T-cell (primary cell): ENCODE measurements at regions of chr1 and their contacts with region 1.

Region 1: GRCh38 chr1:180550241-180550640 is 8.5 kb upstream of the OVAAL start:
- DNase-seq: no peak
- ATAC-seq: no peak
- H3K4me3 ChIP-seq: no peak overlapping the region
- H3K4me3 Mint-ChIP-seq: no peak overlapping the region
- H3K27ac ChIP-seq: no peak overlapping the region
- H3K27ac Mint-ChIP-seq: no peak overlapping the region
- H3K4me1 ChIP-seq: no peaks in the 10 kb centered on the region
- H3K4me1 Mint-ChIP-seq: no peaks in the 10 kb centered on the region
- H3K27me3 ChIP-seq: peaks cover 0 to 2% of the 10 kb centered on the region in 2 experiments
- H3K27me3 Mint-ChIP-seq: no peaks in the 10 kb centered on the region

Region 2: GRCh38 chr1:180527101-180527669 is 23.1 kb before region 1 on chr1:
- CTCF ChIA-PET with region 1: no interaction called
- POLR2A ChIA-PET with region 1: no interaction called
- DNase-seq: no peak
- ATAC-seq: no peak
- H3K4me3 ChIP-seq: no peak overlapping the region
- H3K4me3 Mint-ChIP-seq: no peak overlapping the region
- H3K27ac ChIP-seq: no peak overlapping the region
- H3K27ac Mint-ChIP-seq: no peak overlapping the region
- H3K4me1 ChIP-seq: no peaks in the 10 kb centered on the region
- H3K4me1 Mint-ChIP-seq: peaks cover 0 to 3% (median 3%) of the 10 kb centered on the region in 3 donors
- H3K27me3 ChIP-seq: peaks cover 0 to 3% of the 10 kb centered on the region in 2 experiments
- H3K27me3 Mint-ChIP-seq: peaks cover 0 to 3% of the 10 kb centered on the region in 2 donors

Region 3: GRCh38 chr1:180854001-180854400 is 303.8 kb after region 1 on chr1:
- CTCF ChIA-PET with region 1: no interaction called
- POLR2A ChIA-PET with region 1: interaction called in 1 of 2 experiments, 15 read pairs
- DNase-seq: no peak
- ATAC-seq: no peak
- H3K4me3 ChIP-seq: no peak overlapping the region
- H3K4me3 Mint-ChIP-seq: no peak overlapping the region
- H3K27ac ChIP-seq: no peak overlapping the region
- H3K27ac Mint-ChIP-seq: no peak overlapping the region
- H3K4me1 ChIP-seq: peaks cover 2 to 3% of the 10 kb centered on the region in 2 experiments
- H3K4me1 Mint-ChIP-seq: peaks cover 19 to 35% (median 29%) of the 10 kb centered on the region in 3 donors
- H3K27me3 ChIP-seq: no peaks in the 10 kb centered on the region
- H3K27me3 Mint-ChIP-seq: no peaks in the 10 kb centered on the region

Region 4: GRCh38 chr1:182391362-182392044 is 1841.3 kb after region 1 on chr1 and contains the start of gene GLUL:
- CTCF ChIA-PET with region 1: no interaction called
- POLR2A ChIA-PET with region 1: no interaction called
- DNase-seq: peak; percentile 18 to 75 (median 48)
- ATAC-seq: peak; percentile 73 to 84 (median 75)
- H3K4me3 ChIP-seq: peak within 1 kb of the TSS; percentile 79 to 89
- H3K4me3 Mint-ChIP-seq: peak within 1 kb of the TSS; percentile 89 to 97 (median 97)
- H3K27ac ChIP-seq: peak within 1 kb of the TSS; percentile 40
- H3K27ac Mint-ChIP-seq: peak within 1 kb of the TSS; percentile 91 to 96
- H3K4me1 ChIP-seq: peaks cover 12 to 27% of the 10 kb centered on the region in 2 experiments
- H3K4me1 Mint-ChIP-seq: peaks cover 26 to 38% (median 35%) of the 10 kb centered on the region in 3 donors
- H3K27me3 ChIP-seq: peaks cover 0 to 11% of the 10 kb centered on the region in 2 experiments
- H3K27me3 Mint-ChIP-seq: no peaks in the 10 kb centered on the region
- total RNA-seq, gene GLUL: 49.1 to 88.7 (median 70.3) TPM